B cell (primary cell): ENCODE measurements at regions of chr6 and their contacts with region 1.

Region 1: DNA sequence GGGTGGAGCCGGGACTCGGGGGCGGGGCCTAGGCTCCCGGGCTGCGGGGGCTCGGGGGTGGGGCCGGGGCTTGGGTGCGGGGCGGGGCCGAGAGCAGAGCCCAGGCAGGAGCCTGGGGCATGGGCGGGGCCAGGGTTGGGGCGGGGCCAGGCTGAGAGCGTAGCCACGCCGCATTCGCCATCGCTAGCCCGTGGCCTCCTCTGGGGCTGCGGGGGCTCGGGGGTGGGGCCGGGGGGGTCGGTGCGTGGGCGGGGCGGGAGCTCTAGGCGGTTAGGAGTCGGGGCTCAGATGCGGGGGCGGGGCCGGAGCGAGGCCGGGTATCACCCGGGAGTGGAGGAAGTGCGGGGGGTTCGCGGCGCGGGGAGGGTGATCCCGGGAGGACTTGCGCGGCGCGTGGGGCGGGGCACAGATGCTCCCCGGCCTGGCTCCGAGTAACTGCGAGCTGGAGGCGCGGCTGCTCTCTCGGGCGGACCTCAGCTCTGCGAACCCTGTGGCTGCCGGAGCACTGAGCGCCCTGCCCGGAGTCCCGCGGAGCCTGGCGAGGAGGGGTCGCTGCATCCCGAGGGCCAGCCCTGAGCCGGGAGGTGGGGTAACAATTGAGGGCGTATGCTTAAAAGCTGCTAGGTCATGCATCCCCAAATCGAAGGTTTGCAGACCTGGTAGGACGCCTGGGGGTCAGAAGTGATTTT is 434 bp upstream of the ECI2 start:
- DNase-seq: peak; percentile 91
- ATAC-seq: peak; percentile 92
- H3K4me3 ChIP-seq: peak overlapping the region; percentile 70 to 85 (median 72)
- H3K4me3 Mint-ChIP-seq: peak overlapping the region; percentile 90
- H3K27ac ChIP-seq: peak overlapping the region; percentile 37 to 57
- H3K27ac Mint-ChIP-seq: peak overlapping the region; percentile 85
- H3K4me1 ChIP-seq: peaks cover 15 to 21% of the 10 kb centered on the region in 2 donors
- H3K4me1 Mint-ChIP-seq: peaks cover 23% of the 10 kb centered on the region
- H3K27me3 ChIP-seq: no peaks in the 10 kb centered on the region
- H3K27me3 Mint-ChIP-seq: no peaks in the 10 kb centered on the region
- CTCF ChIP-seq: no peak

Region 2: GRCh38 chr6:2245094-2245876 is 1890.5 kb before region 1 on chr6 and contains the start of gene GMDS:
- CTCF ChIA-PET with region 1: no interaction called
- POLR2A ChIA-PET with region 1: no interaction called
- intact Hi-C with region 1: loop called (anchors 5 kb)
- DNase-seq: peak; percentile 93
- ATAC-seq: peak; percentile 97
- H3K4me3 ChIP-seq: peak within 1 kb of the TSS; percentile 65 to 98 (median 86)
- H3K4me3 Mint-ChIP-seq: peak within 1 kb of the TSS; percentile 92
- H3K27ac ChIP-seq: peak within 1 kb of the TSS; percentile 85 to 95
- H3K27ac Mint-ChIP-seq: peak within 1 kb of the TSS; percentile 92
- H3K4me1 ChIP-seq: peaks cover 14 to 21% of the 10 kb centered on the region in 2 donors
- H3K4me1 Mint-ChIP-seq: peaks cover 34% of the 10 kb centered on the region
- H3K27me3 ChIP-seq: no peaks in the 10 kb centered on the region
- H3K27me3 Mint-ChIP-seq: no peaks in the 10 kb centered on the region
- CTCF ChIP-seq: no peak
- total RNA-seq, gene GMDS: 16.4 and 22.5 TPM in 2 replicates

Region 3: GRCh38 chr6:3118353-3119039 is 1017.3 kb before region 1 on chr6 and contains the start of gene BPHL:
- CTCF ChIA-PET with region 1: no interaction called
- POLR2A ChIA-PET with region 1: no interaction called
- intact Hi-C with region 1: loop called (anchors 1 kb)
- DNase-seq: peak; percentile 99
- ATAC-seq: peak; percentile 93
- H3K4me3 ChIP-seq: peak within 1 kb of the TSS; percentile 66 to 98 (median 78)
- H3K4me3 Mint-ChIP-seq: peak within 1 kb of the TSS; percentile 97
- H3K27ac ChIP-seq: peak within 1 kb of the TSS; percentile 93 to 95
- H3K27ac Mint-ChIP-seq: peak within 1 kb of the TSS; percentile 98
- H3K4me1 ChIP-seq: peaks cover 12% of the 10 kb centered on the region in 2 donors
- H3K4me1 Mint-ChIP-seq: peaks cover 18% of the 10 kb centered on the region
- H3K27me3 ChIP-seq: no peaks in the 10 kb centered on the region
- H3K27me3 Mint-ChIP-seq: no peaks in the 10 kb centered on the region
- CTCF ChIP-seq: no peak
- total RNA-seq, gene BPHL: 14.3 and 16.3 TPM in 2 replicates

Region 4: GRCh38 chr6:3356056-3356761 is 779.6 kb before region 1 on chr6:
- CTCF ChIA-PET with region 1: no interaction called
- POLR2A ChIA-PET with region 1: no interaction called
- intact Hi-C with region 1: loop called (anchors 5 kb)
- DNase-seq: peak; percentile 97
- ATAC-seq: peak; percentile 96
- H3K4me3 ChIP-seq: peak overlapping the region; percentile 0 to 82 (median 66)
- H3K4me3 Mint-ChIP-seq: peak overlapping the region; percentile 96
- H3K27ac ChIP-seq: peak overlapping the region; percentile 67 to 82
- H3K27ac Mint-ChIP-seq: peak overlapping the region; percentile 96
- H3K4me1 ChIP-seq: peaks cover 26 to 37% of the 10 kb centered on the region in 2 donors
- H3K4me1 Mint-ChIP-seq: peaks cover 48% of the 10 kb centered on the region
- H3K27me3 ChIP-seq: no peaks in the 10 kb centered on the region
- H3K27me3 Mint-ChIP-seq: no peaks in the 10 kb centered on the region
- CTCF ChIP-seq: no peak

Region 5: GRCh38 chr6:4055420-4056041 is 80.3 kb before region 1 on chr6:
- CTCF ChIA-PET with region 1: interaction called, 11 read pairs
- POLR2A ChIA-PET with region 1: no interaction called
- intact Hi-C with region 1: no loop called
- DNase-seq: no peak
- ATAC-seq: no peak
- H3K4me3 ChIP-seq: no peak overlapping the region
- H3K4me3 Mint-ChIP-seq: no peak overlapping the region
- H3K27ac ChIP-seq: no peak overlapping the region
- H3K27ac Mint-ChIP-seq: no peak overlapping the region
- H3K4me1 ChIP-seq: no peaks in the 10 kb centered on the region
- H3K4me1 Mint-ChIP-seq: no peaks in the 10 kb centered on the region
- H3K27me3 ChIP-seq: no peaks in the 10 kb centered on the region
- H3K27me3 Mint-ChIP-seq: no peaks in the 10 kb centered on the region
- CTCF ChIP-seq: no peak

Region 6: DNA sequence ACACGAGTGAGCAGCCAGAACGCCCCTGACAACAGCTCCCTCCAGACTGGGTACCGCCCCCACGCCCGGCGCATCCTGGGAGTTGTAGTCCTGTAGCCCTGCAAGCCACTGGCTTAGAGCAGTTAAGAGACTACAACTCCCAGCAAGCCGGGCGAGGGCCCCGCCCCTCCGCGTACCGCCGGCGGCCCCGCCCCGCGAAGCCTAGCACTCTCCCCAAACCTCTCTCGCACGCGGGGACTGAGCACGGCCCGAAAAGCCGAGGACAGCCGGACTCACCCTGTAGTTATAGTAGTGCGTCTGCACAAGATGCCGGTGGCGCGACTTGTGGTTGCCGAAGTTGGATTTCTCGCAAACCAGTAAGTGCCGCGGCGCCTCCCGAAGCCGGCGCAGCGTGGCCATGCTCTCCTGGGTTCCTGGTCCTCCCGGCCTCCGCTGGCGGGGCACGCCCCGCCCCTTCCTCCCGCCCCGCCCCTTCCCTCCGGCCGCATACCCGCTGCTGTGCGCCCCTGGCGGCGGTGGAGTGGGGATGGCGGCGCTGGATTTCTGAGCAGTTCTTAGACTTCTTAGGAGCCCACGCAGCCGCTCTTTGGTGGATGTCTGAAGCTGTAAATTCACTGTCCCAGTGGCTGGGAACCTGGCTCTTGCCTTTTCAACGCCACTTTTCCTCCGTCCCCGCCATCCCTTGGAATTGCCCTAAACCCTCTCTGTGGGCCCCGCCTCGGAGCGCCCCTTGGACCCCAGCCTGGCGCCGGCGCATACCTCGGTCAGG is 868.0 kb after region 1 on chr6 and contains the start of gene RPP40:
- CTCF ChIA-PET with region 1: no interaction called
- POLR2A ChIA-PET with region 1: no interaction called
- intact Hi-C with region 1: loop called (anchors 2 kb)
- DNase-seq: peak; percentile 99
- ATAC-seq: peak; percentile 92
- H3K4me3 ChIP-seq: peak within 1 kb of the TSS; percentile 70 to 82 (median 71)
- H3K4me3 Mint-ChIP-seq: peak within 1 kb of the TSS; percentile 98
- H3K27ac ChIP-seq: peak within 1 kb of the TSS; percentile 81 to 90
- H3K27ac Mint-ChIP-seq: peak within 1 kb of the TSS; percentile 99
- H3K4me1 ChIP-seq: peaks cover 6 to 14% of the 10 kb centered on the region in 2 donors
- H3K4me1 Mint-ChIP-seq: peaks cover 10% of the 10 kb centered on the region
- H3K27me3 ChIP-seq: no peaks in the 10 kb centered on the region
- H3K27me3 Mint-ChIP-seq: no peaks in the 10 kb centered on the region
- CTCF ChIP-seq: peak; percentile 82
- total RNA-seq, gene RPP40: 3.8 TPM in 2 replicates